A673 (cell line): ENCODE measurements at regions of chr12 and their contacts with region 1.

Region 1: GRCh38 chr12:122888232-122888867 is 7.6 kb downstream of the VPS37B start:
- DNase-seq: peak; percentile 68
- H3K4me3 ChIP-seq: peak overlapping the region; percentile 28
- H3K27ac ChIP-seq: peak overlapping the region; percentile 72
- H3K4me1 ChIP-seq: peaks cover 64% of the 10 kb centered on the region
- H3K27me3 ChIP-seq: no peaks in the 10 kb centered on the region
- CTCF ChIP-seq: no peak

Region 2: DNA sequence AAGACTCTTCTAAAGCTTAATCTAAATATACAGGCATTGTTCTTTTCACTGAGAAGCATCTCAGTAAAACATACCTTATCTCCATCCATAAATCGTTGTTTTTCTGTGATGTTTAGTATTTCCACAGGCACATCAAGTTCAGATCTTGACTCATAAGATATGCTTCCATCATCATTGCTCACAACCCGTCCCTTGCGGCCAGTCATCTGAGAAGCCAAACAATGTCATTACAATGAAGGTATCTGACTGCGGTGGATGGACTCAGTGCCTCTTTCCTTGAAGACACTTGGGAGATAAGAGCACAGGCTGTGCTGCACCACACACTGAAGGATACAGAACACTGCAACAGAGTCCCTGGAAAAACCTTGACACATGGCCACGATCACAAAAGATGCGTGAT is 431.5 kb after region 1 on chr12:
- CTCF ChIA-PET with region 1: no interaction called
- POLR2A ChIA-PET with region 1: interaction called, 12 read pairs
- intact Hi-C with region 1: no loop called
- DNase-seq: no peak
- H3K4me3 ChIP-seq: no peak overlapping the region
- H3K27ac ChIP-seq: no peak overlapping the region
- H3K4me1 ChIP-seq: no peaks in the 10 kb centered on the region
- H3K27me3 ChIP-seq: no peaks in the 10 kb centered on the region
- CTCF ChIP-seq: no peak